ENCODE measurements at regions of chr12 and their contacts with region 1.

Region 1: GRCh38 chr12:96456265-96456974 is 33.0 kb upstream of the CFAP54 start:
- DNase-seq: peak; percentile 62
- ATAC-seq: peak; percentile 96
- H3K4me3 ChIP-seq: no peak overlapping the region
- H3K27ac ChIP-seq: peak overlapping the region; percentile 24; the same call in 1 of the 2 replicates
- H3K4me1 ChIP-seq: peaks cover 22% of the 10 kb centered on the region
- H3K27me3 ChIP-seq: no peaks in the 10 kb centered on the region
- CTCF ChIP-seq: no peak
- EP300 ChIP-seq: peak in 1 of 2 experiments; percentile 93; a peak in 2 of 4 replicates
- POLR2A ChIP-seq: no peak
- RAD21 ChIP-seq: no peak

Region 2: DNA sequence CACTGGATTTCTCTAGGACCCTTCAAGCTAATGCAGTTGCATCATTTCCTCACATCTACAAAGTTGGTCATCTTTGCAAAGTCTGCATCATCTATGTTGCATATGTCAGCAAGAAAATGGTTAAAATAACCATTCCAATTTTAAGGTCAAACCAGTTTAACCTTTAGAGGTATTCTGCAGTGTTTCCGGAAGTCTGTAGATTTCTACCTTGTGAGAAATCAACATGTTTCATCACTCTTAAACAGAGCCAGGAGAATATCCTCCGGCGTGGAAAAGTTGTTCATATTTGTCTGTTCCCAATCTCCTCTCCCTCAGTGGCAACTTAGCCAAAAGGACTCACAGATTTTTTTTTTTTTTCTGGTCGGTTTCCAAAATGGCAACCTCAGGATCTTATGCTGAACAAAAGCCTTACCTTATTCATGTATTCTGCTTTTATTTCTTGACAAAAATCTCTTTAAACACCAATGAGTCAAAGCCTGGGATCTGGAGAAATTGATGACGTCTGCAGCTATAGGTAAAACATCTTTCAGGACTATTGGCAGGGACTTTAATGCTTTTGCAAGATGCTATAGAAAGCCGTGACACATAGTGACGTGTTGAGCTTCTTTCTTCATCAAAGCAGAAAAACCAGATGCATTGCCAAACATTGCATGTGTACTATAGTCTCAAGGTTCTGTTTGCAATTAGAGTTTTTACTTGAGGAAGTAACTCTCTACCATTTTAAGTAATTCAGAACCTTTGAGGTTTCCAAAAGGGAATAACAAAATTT is 40.2 kb before region 1 on chr12:
- CTCF ChIA-PET with region 1: no interaction called
- POLR2A ChIA-PET with region 1: no interaction called
- RAD21 ChIA-PET with region 1: interaction called, 3 read pairs
- SMC1A ChIA-PET with region 1: no interaction called
- in situ Hi-C with region 1: no loop called
- intact Hi-C with region 1: loop called (anchors 5 kb)
- DNase-seq: no peak
- ATAC-seq: no peak
- H3K4me3 ChIP-seq: no peak overlapping the region
- H3K27ac ChIP-seq: no peak overlapping the region
- H3K4me1 ChIP-seq: peaks cover 22% of the 10 kb centered on the region
- H3K27me3 ChIP-seq: no peaks in the 10 kb centered on the region
- CTCF ChIP-seq: no peak
- EP300 ChIP-seq: no peak
- POLR2A ChIP-seq: no peak
- RAD21 ChIP-seq: no peak

Region 3: DNA sequence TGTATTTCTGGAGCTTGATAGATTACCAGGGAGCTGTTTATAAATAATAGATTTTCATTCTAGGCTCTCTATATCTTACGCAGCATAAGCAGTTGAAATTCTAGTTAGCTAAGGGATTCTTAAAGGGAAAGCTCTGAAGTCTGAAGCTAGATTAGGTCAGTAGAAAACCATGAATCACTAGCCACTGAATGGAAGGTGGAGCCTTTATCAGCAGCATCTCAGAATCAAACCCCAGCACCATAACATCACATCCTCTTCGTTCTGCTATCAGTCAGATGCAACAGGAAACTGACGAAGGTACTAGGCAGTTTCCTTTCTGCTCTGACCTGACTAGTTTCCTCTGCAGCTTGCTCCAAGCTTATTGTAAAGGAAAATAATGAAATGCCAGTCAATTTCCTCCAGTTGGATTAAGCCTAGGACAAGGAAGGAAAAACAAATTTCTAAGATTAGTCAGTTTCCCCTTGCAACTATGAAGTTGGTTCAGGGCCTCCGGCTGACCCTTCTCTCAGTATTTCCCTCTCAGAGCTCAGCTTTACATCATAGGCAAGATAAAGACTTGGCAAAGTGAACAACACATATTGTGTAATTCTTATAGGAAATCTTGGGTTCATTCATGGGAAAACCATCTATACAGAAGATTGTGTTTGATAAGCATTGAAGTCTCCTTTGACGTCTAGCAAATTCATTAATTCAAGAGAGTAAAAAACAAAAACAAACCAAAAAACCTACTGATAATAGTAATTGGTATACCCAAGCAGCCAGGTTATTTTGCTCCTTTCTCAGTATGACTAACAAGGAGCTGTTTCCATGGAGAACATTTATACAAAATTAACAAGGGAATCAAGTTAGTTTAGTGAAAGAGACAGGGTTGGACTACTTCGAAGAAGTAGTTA is 10.5 kb before region 1 on chr12:
- CTCF ChIA-PET with region 1: interaction called, 7 read pairs
- POLR2A ChIA-PET with region 1: interaction called, 3 read pairs
- RAD21 ChIA-PET with region 1: interaction called, 3 read pairs
- SMC1A ChIA-PET with region 1: interaction called, 13 read pairs
- in situ Hi-C with region 1: no loop called
- intact Hi-C with region 1: no loop called
- DNase-seq: peak; percentile 53
- ATAC-seq: peak; percentile 99
- H3K4me3 ChIP-seq: no peak overlapping the region
- H3K27ac ChIP-seq: no peak overlapping the region
- H3K4me1 ChIP-seq: no peaks in the 10 kb centered on the region
- H3K27me3 ChIP-seq: no peaks in the 10 kb centered on the region
- CTCF ChIP-seq: no peak
- EP300 ChIP-seq: no peak
- POLR2A ChIP-seq: no peak
- RAD21 ChIP-seq: no peak

Region 4: GRCh38 chr12:96501139-96501761 is 44.8 kb after region 1 on chr12:
- CTCF ChIA-PET with region 1: no interaction called
- POLR2A ChIA-PET with region 1: no interaction called
- RAD21 ChIA-PET with region 1: interaction called, 3 read pairs
- SMC1A ChIA-PET with region 1: interaction called, 5 read pairs
- in situ Hi-C with region 1: no loop called
- intact Hi-C with region 1: loop called (anchors 5 kb)
- DNase-seq: peak; percentile 69
- ATAC-seq: peak; percentile 90
- H3K4me3 ChIP-seq: no peak overlapping the region
- H3K27ac ChIP-seq: peak overlapping the region; percentile 62
- H3K4me1 ChIP-seq: peaks cover 33% of the 10 kb centered on the region
- H3K27me3 ChIP-seq: no peaks in the 10 kb centered on the region
- CTCF ChIP-seq: no peak
- EP300 ChIP-seq: no peak
- POLR2A ChIP-seq: no peak
- RAD21 ChIP-seq: no peak

Measured in GM12878 (cell line).